ENCODE measurements at regions of chr19 and their contacts with region 1.

Region 1: GRCh38 chr19:15180451-15181390 is 20.1 kb downstream of the NOTCH3 start:
- DNase-seq: no peak
- H3K4me3 ChIP-seq: peak overlapping the region in 2 of 3 donors; percentile 41 to 45
- H3K27ac ChIP-seq: no peak overlapping the region
- H3K4me1 ChIP-seq: no peaks in the 10 kb centered on the region
- H3K27me3 ChIP-seq: no peaks in the 10 kb centered on the region
- CTCF ChIP-seq: no peak
- POLR2A ChIP-seq: no peak

Region 2: GRCh38 chr19:15248648-15249527 is 68.2 kb after region 1 on chr19:
- intact Hi-C with region 1: loop called (anchors 10 kb)
- DNase-seq: peak in 1 of 2 donors; percentile 48
- H3K4me3 ChIP-seq: peak overlapping the region in 1 of 3 donors; percentile 21
- H3K27ac ChIP-seq: peak overlapping the region; percentile 81 to 88
- H3K4me1 ChIP-seq: peaks cover 36 to 39% of the 10 kb centered on the region in 2 donors
- H3K27me3 ChIP-seq: no peaks in the 10 kb centered on the region
- CTCF ChIP-seq: no peak
- POLR2A ChIP-seq: no peak

Region 3: DNA sequence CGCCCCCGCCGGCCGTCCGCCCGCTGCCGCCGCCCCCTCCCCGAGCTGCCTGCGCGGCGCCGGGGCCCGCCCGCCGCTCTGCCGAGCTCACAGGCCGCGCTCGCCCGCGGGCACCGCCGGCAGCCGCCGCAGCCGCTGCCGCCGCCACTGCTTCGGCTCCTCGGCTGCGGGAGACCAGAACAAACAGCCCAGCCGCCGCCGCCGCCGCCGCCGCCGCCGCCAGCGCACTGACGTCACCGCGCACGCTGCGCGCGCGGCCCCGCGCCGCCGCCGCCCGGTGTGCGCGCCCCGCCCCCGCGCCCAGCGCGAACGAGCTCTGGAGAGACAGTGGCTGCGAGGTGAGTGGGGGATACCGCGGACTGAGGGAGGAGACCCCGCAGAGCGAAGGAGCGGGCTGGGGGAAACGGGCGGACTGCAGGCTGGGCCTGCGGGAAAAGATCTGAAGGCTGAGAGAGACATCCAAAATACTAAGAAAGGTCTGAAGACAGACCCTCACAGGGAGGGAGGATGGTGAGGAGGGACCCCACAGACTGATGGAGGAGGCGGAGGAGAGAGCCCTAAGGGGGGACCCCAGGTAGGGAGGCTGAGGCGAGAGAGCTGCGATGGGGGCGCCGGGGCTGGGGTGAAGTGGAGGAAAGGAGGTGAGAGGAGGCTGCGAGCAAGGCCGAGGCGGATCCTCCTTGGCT is 151.7 kb after region 1 on chr19 and contains the start of gene BRD4:
- intact Hi-C with region 1: loop called (anchors 10 kb)
- DNase-seq: peak; percentile 50 to 65
- H3K4me3 ChIP-seq: peak within 1 kb of the TSS; percentile 70 to 98 (median 77)
- H3K27ac ChIP-seq: peak within 1 kb of the TSS; percentile 93 to 100
- H3K4me1 ChIP-seq: peaks cover 0 to 22% of the 10 kb centered on the region in 2 donors
- H3K27me3 ChIP-seq: no peaks in the 10 kb centered on the region
- CTCF ChIP-seq: no peak
- POLR2A ChIP-seq: no peak
- total RNA-seq, gene BRD4: 25.6 to 37.5 (median 33.8) TPM

Region 4: DNA sequence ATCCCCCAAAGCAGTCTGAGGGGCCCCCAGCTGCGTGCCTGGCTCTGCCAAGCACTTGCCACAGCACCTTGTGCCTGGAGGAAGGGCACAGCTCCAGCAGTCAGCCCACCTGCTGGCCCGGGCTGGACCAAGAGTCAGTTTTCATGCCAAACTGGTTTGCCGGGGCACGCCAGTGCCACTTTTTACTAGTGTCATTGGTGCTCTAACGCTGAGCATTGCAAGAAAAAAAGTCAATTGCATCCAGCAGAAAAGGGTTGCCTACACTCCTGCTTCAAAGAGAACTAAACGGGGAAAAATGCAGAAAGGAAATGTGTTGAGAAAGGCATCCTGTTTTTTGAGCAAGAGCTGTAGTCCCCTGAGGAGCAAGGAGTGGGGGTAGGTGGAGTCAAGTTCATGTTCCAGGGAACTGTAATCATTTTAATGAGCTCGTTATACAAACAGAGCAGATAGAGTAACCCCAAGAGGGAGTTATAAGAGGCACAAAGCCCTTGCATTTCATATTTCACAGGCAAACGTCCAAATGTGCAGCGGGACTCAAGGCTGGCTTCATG is 1776.5 kb after region 1 on chr19:
- intact Hi-C with region 1: no loop called
- DNase-seq: peak; percentile 20 to 28
- H3K4me3 ChIP-seq: peak overlapping the region in 1 of 3 donors; percentile 5
- H3K27ac ChIP-seq: no peak overlapping the region
- H3K4me1 ChIP-seq: no peaks in the 10 kb centered on the region
- H3K27me3 ChIP-seq: no peaks in the 10 kb centered on the region
- CTCF ChIP-seq: no peak
- POLR2A ChIP-seq: no peak